ENCODE measurements at regions of chr2 and their contacts with region 1.

Region 1: DNA sequence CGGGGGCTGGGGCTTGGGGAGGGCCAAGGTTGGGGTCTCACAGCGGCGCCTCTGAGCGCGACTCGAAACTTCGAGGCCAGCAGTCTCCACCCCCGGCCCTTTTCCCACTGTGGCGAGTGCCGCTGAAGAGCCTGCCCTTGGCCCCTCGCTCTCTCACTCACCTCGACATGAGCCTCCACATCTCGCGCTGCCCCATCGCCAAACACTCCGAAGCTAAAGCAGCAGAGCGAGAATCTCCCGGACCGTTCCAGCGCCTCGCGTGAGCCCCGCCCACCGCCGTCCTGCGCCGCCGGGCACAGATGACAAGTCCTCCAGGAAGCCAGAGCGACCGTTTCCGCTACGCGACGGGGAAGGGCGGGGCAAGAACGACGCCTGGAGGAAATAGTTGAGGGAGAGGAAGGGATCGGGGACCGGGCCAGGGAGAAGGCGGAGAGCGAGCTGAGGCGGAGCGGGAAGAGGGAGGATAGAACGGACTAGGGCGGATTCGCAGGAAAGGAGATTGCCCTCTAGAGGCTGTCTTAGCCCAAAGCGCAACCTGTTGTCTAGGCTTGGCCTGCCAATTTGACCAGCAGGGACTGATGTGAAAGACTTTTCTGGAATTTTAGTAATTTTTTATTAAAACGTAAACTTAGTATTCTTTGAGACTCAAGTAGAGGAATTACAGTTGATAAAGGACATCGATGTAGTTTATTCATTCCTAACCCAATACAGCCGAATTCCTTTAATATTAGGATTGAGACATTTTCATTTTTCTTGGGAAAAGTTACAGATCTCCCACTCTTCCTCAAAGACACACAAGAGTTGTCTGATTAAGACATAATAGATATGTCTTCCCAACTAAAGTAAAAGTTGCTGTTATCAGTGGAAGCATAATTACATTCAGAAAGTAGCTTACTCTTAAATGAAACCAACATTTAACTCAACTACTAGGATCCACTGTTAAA is at the start of gene HIBCH:
- DNase-seq: peak; percentile 99
- H3K4me3 ChIP-seq: peak within 1 kb of the TSS; percentile 58 to 72 (median 64)
- H3K27ac ChIP-seq: peak within 1 kb of the TSS; percentile 80 to 91 (median 89)
- H3K4me1 ChIP-seq: peaks cover 0 to 41% (median 33%) of the 10 kb centered on the region in 4 donors
- H3K27me3 ChIP-seq: no peaks in the 10 kb centered on the region
- CTCF ChIP-seq: peak; percentile 46 to 66 (median 62)
- EP300 ChIP-seq: peak in 1 of 4 donors; percentile 46
- POLR2A ChIP-seq: peak; percentile 33 to 49
- total RNA-seq, gene HIBCH: 18.1 to 21.6 (median 19.0) TPM

Region 2: GRCh38 chr2:190137561-190137960 is 182.3 kb before region 1 on chr2:
- intact Hi-C with region 1: no loop called
- DNase-seq: no peak
- H3K4me3 ChIP-seq: no peak overlapping the region
- H3K27ac ChIP-seq: no peak overlapping the region
- H3K4me1 ChIP-seq: no peaks in the 10 kb centered on the region
- H3K27me3 ChIP-seq: no peaks in the 10 kb centered on the region
- CTCF ChIP-seq: no peak
- EP300 ChIP-seq: no peak
- POLR2A ChIP-seq: no peak

Region 3: GRCh38 chr2:190267302-190267701 is 52.5 kb before region 1 on chr2:
- intact Hi-C with region 1: no loop called
- DNase-seq: no peak
- H3K4me3 ChIP-seq: no peak overlapping the region
- H3K27ac ChIP-seq: no peak overlapping the region
- H3K4me1 ChIP-seq: no peaks in the 10 kb centered on the region
- H3K27me3 ChIP-seq: no peaks in the 10 kb centered on the region
- CTCF ChIP-seq: no peak
- EP300 ChIP-seq: no peak
- POLR2A ChIP-seq: no peak

Region 4: DNA sequence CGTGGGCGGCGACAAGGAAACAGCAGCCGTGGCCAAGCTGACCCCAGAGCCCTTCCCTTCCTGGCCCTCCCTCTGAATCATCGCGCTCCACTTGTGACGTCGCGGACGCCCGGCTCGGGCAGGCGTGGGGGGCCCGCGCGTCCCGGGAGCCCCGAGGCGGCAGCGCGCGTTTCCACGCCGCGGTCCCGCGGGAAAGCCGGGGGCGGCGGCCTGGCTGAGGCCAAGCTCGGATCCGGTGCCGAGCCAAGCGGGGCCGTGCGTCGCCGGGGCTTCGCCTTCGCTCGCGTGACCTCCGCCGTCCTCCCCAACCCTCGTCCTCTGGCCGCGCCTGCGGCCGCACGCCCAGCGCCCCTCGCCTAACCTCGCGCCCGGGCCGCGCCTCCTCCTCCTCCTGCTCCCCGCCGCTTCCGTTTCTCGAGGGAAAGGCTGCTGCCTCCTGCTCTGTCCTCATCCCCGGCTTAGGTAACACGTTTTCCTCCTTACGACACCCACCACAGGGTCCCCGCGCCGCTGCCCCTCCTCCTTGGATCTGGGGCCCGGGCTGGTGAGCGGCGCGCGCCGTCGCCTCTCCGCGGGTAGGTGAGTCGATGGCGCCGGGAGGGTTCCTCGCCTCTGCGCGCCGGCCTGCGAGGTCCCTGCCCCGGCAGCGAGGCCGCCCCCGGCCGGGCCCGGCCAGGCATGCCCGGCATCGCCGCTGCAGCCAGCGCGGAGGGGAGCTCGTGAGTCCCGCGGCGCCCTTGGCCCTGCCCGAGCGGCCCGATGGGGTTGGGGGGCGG is 23.9 kb after region 1 on chr2 and contains the start of gene INPP1:
- intact Hi-C with region 1: loop called (anchors 2 kb)
- DNase-seq: peak; percentile 85
- H3K4me3 ChIP-seq: peak within 1 kb of the TSS; percentile 61 to 91 (median 80)
- H3K27ac ChIP-seq: peak within 1 kb of the TSS; percentile 91 to 94 (median 94)
- H3K4me1 ChIP-seq: peaks cover 0 to 29% (median 18%) of the 10 kb centered on the region in 4 donors
- H3K27me3 ChIP-seq: no peaks in the 10 kb centered on the region
- CTCF ChIP-seq: no peak
- EP300 ChIP-seq: no peak
- POLR2A ChIP-seq: no peak
- total RNA-seq, gene INPP1: 12.5 to 19.9 (median 15.5) TPM

Region 5: DNA sequence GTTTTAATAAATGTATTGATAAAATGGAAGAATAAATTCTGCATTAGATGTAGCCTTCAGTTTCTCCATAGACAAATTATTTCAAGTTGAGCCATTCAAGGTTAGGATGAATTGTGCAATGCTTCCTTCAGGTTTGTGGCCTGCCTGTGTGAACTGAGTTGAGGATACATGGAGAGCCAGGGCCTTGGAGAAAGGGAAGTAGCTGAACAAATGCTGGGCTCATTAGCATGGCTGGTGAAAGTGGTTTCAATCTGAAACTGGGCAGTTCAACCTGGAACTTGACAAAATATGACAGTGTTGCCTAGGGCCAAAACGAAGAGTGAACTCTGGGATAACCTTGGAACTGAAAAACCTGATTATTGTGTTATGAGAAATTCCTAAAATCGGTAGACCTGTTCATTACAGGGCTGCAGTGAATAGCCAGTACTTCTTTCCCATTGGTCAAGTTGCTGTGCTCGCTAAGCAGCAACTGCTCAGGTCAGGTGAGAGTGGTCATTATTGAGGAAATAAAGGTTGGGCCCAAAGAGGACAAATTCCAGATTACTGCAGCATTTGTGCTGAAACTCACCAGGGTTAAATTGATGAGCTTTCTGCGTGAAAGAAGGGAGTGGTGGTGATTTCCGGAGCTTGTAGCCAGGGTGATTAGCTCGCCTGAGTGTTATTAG is 36.3 kb after region 1 on chr2:
- intact Hi-C with region 1: loop called (anchors 5 kb)
- DNase-seq: no peak
- H3K4me3 ChIP-seq: no peak overlapping the region
- H3K27ac ChIP-seq: peak overlapping the region; percentile 17 to 44 (median 39)
- H3K4me1 ChIP-seq: peaks cover 0 to 63% (median 43%) of the 10 kb centered on the region in 4 donors
- H3K27me3 ChIP-seq: no peaks in the 10 kb centered on the region
- CTCF ChIP-seq: no peak
- EP300 ChIP-seq: no peak
- POLR2A ChIP-seq: no peak

Region 6: DNA sequence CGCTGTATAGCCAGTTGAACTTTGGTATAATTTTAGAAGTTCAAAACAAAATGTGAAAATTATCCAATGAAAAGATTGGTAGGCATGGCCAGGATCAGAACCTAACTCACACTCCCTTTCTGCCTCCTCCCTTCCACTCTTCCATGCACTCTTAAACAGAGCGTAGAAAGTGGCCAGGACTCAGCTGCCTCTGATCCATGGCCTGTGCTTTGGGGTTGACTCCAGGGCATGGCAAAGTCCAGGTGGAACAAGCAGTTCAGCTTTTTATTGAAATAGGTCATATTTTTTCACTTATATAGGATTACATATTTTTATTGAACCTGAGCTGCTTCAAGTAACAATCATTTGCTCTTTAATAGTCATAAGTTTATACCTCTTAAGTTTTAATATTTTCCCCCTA is 49.8 kb after region 1 on chr2:
- intact Hi-C with region 1: loop called (anchors 5 kb)
- DNase-seq: no peak
- H3K4me3 ChIP-seq: no peak overlapping the region
- H3K27ac ChIP-seq: no peak overlapping the region
- H3K4me1 ChIP-seq: peaks cover 0 to 7% (median 0%) of the 10 kb centered on the region in 4 donors
- H3K27me3 ChIP-seq: no peaks in the 10 kb centered on the region
- CTCF ChIP-seq: no peak
- EP300 ChIP-seq: no peak
- POLR2A ChIP-seq: no peak

Region 7: DNA sequence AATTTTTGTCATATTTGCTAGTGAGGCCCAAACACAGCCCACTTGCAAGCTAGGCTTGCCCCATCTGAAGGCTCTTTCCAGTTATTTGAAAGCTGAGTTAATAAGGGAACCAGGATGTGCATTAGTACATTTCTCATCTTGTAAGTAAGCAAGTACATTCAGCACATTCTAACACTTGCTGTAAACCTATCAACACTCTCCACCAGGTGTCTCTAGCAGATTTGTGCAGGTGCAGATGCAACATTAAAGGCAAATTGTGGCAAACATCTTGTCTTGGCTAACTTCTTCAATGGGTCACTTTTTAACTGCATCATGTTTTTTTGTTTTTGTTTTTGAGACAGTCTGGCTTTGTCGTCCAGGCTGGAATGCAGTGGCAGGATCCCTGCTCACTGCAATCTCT is 63.0 kb after region 1 on chr2:
- intact Hi-C with region 1: no loop called
- DNase-seq: no peak
- H3K4me3 ChIP-seq: no peak overlapping the region
- H3K27ac ChIP-seq: no peak overlapping the region
- H3K4me1 ChIP-seq: no peaks in the 10 kb centered on the region
- H3K27me3 ChIP-seq: no peaks in the 10 kb centered on the region
- CTCF ChIP-seq: peak; percentile 42 to 51 (median 44)
- EP300 ChIP-seq: no peak
- POLR2A ChIP-seq: no peak

Region 8: DNA sequence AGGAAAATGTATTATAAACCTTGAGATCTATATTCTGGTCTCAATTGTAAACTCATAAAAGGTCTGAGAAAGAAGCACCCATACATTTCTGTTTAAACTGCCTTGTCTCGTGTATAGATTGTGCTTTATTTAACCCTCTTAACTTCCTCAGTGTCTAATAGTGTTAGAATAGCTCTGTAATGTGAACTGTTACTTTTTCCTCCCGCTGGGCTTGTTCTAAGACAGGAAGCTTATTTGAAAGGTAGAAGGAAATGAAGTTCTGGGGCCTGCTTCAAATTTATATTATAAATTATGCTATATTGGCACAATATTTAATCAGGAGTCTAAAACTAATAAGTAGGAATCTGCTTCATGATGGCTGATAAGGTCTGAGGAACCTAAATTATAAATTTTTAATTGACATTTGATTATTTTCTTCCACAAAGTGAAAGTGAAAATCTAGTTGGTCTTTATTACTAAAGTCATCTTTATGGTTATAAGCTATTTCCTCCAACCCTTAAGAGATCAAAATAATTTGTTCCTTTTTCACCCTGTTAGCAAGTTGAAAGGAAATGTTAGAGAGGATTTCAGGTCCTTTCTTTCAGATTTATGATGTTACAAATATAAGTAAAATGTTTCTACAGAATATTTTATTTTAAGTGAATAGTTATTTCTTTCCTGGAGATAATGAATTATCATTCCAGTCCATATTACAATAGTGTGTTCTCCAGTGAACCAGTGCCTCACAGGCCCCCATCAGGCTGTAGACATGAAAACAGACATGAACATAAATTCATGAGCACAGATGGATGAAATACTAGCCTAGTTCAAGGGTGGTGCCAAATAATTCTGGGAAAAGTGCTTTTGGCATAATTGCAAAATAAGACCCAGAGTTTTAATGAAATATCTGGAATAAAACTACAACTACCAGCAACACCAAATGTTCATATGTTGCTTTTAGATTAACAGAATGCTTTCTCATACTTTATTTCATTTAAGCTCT is 96.3 kb after region 1 on chr2:
- intact Hi-C with region 1: no loop called
- DNase-seq: no peak
- H3K4me3 ChIP-seq: no peak overlapping the region
- H3K27ac ChIP-seq: peak overlapping the region in 2 of 4 donors; percentile 0 to 6
- H3K4me1 ChIP-seq: peaks cover 0 to 27% (median 7%) of the 10 kb centered on the region in 4 donors
- H3K27me3 ChIP-seq: no peaks in the 10 kb centered on the region
- CTCF ChIP-seq: no peak
- EP300 ChIP-seq: no peak
- POLR2A ChIP-seq: no peak

Measured in sigmoid colon (tissue), 7 donors.